ENCODE measurements at regions of chr5 and their contacts with region 1.

Region 1: DNA sequence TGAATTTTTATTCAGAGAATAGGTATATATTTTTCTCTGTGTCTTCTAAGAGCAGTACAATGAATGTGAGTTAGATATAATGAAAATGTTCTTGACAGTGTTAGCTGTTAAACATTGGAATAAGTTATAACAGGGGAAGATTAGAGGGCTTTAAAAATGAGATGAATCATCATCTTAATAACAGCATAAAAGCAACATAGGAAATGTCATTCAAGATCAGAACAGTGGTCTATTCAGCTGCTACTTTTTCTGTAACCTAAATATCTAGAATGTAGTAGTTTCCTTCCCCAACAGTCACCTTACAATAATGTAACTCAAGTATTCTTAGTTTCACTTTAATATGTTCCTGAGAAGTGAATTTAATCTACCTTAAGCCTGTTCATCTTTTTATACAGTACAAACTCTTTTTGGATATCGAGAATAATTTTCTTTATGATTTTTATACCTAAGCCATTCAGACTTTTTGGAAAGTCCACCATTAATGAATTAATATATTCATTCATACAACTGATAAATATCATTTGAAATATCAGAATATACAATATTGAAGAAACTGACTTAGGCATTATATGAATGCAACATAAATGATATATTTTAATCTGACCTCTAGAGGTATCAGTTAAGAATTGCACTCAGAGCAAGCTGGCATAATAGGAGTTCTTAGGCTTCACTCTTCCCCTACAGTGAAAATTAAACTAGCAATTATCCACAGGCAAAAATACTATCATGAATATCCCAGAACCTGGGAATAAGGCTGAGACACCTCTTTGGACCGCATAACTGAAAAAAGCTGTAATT is 66.1 kb upstream of the EDIL3 start:
- DNase-seq: no peak

Region 2: DNA sequence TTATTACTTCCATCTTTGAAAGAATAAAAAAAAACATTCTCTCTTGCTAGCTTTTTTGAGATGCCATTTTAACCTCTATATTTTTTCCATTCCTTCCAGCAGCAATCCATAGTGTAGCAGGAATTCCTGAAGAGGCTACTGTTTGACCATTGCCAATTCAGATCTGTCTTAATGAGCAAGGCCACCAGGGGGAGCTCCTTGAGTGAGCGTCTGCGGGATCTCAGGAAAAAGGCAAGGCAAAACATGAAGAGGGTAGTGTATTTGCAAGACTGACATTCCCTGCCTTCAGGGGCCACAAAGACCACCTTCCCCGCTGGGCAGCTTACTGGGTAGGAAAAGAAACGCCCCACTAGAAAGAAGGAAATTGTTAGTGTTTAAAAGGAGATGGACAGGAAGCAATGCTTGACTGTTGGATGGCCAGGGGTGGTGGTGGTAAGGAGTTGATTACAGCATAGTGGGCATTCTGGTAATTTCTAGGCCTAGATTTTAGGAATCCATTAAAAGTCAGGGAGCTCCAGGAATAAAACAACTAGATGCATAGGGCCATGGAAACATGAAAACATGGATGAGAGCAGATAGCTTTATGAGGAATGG is 523.6 kb before region 1 on chr5:
- intact Hi-C with region 1: loop called (anchors 2 kb)
- DNase-seq: peak; percentile 30 to 93 (median 78)

Region 3: DNA sequence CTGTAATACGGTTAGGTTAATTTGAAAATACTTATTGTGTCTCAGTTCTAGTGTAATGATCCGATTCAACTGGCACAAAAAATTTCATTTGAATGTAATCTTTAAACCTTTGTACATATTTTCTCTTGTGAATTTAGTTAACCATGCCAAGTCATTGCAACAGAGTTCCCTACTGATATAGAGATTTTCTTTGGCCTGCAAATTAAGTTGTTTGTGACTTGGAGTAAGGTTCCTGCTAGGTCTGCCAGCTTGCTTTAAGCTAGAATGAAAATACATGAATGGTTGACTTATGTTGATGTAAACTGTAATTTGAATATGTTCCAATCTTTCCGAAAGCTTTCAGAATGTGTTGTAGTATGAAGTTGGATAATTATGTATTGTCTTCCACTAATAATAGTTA is 938.0 kb after region 1 on chr5:
- intact Hi-C with region 1: no loop called
- DNase-seq: no peak

Measured in posterior cingulate gyrus (tissue), 11 donors.